Spleen (tissue), 13 donors: ENCODE measurements at regions of chr10 and their contacts with region 1.

Region 1: DNA sequence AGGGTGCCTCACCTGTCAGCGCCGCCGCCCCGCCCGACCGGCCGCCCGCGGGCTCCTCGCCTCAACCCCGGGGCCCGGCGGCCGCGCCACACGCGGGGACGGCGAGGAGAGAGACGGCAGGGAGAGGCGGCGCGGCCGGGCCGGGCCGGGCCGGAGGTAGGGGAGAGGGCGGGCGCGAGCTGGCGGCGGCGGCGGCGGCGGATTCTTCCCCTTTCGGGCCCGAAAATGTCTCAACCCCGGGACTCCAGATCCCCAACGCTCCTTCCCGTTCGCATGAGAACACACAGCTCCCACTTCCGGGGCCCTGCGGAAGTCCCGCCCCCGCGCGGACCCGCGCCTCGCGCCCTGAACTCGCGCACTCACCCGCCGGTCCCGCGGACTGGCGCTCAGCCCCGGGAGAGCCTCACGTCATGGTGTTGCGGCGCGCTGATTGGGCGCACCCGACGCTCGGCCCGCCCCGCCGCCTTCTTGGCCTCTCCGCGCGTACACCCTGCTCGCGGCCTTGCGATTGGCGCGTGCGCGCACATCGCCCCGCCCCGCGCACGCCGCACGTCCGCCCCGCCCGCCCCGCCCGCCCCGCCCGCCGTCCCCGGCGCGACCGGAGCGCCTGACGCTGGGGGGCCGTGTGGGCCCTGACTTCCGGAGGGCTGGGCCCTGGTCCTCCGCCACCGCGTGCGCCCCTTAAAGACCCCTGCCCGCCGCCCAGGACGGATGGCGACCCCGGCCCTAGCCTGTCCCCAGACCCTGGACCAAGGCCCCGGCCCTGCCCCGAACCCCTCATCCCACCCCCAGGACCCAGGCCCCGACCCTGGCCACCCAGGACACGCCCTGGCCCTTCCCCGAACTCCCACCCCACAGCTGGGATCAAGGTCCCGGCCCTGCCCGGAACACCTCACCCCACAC is at the start of gene LARP4B:
- DNase-seq: peak; percentile 99
- H3K4me3 ChIP-seq: peak within 1 kb of the TSS; percentile 40 to 89 (median 61)
- H3K27ac ChIP-seq: peak within 1 kb of the TSS; percentile 74 to 98 (median 94)
- H3K4me1 ChIP-seq: peaks cover 21 to 55% (median 39%) of the 10 kb centered on the region in 6 donors
- H3K27me3 ChIP-seq: no peaks in the 10 kb centered on the region
- CTCF ChIP-seq: no peak
- POLR2A ChIP-seq: peak in 2 of 3 donors; percentile 15 to 41
- total RNA-seq, gene LARP4B: 78.8 to 163 (median 105) TPM

Region 2: DNA sequence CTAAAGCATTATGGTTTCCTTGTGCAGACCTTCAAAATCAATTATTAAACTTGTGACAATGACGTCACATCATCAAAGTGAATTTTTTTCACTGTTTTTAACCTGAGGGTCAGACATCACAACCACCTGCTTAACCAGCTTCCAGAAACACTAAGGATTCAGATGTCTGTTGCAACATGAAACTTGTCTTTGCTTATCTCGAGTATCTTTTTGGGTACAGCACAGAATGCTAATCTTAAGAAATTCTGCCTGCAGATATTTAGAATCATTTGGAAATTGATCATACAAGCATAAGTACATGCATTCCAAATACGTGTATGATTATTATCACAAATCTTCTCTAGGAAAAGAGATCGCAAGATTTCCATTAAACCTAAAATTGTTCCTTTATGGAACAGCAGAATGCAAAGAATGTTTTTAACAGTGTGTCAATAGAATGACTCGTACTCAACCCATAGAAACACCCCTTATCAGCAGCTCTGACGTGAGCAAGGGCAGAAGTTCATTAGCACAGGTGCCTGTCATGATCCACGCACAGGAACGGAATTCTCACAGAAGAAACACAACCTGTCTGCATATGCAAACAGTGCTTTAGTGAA is 52.5 kb after region 1 on chr10:
- intact Hi-C with region 1: no loop called
- DNase-seq: no peak
- H3K4me3 ChIP-seq: no peak overlapping the region
- H3K27ac ChIP-seq: no peak overlapping the region
- H3K4me1 ChIP-seq: peaks cover 10 to 24% (median 15%) of the 10 kb centered on the region in 6 donors
- H3K27me3 ChIP-seq: no peaks in the 10 kb centered on the region
- CTCF ChIP-seq: no peak
- POLR2A ChIP-seq: no peak

Region 3: DNA sequence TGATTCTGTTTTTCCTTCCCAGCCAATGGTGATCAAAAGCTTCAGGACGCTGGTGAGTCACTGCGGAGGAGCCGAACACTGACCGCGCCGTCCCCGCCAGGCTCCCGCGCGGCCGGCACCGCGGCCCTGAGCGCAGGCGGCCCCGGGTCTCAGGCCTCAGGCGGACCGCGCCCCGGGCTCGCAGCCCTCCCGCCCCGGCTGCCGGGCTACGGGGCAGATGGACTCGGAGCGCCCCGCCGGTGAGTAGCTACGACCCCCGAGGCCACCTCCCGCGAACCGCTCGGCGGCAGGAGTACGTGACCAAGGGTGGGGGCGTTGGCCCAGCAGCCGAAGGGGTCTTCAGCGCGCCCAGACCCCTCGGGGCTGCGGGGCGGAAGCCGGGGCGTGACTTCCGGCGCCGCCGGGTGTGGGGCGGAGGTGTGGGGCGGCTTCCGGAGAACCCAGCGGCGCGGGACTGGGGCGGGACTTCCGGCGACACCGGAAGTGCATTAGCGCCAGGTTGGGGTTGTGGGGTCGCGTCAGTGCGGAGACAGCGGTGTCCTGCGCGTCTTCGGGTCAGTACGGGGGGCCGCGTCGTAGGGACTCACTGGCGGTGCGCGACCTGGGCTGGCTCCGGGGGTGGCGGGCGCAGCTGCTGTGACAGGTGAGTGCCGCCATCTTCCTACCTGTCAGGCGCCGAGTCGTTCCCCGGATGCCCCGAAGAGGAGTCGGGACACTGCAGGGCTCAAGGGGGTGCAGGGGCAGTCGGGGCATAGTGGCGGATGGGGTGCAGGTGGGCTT is 124.8 kb after region 1 on chr10 and contains the start of gene WDR37:
- intact Hi-C with region 1: loop called (anchors 5 kb)
- DNase-seq: peak; percentile 97
- H3K4me3 ChIP-seq: peak within 1 kb of the TSS; percentile 88 to 99 (median 95)
- H3K27ac ChIP-seq: peak within 1 kb of the TSS; percentile 96 to 100 (median 100)
- H3K4me1 ChIP-seq: peaks cover 51 to 90% (median 77%) of the 10 kb centered on the region in 6 donors
- H3K27me3 ChIP-seq: no peaks in the 10 kb centered on the region
- CTCF ChIP-seq: no peak
- POLR2A ChIP-seq: peak in 1 of 3 donors; percentile 47
- total RNA-seq, gene WDR37: 29.2 to 60.6 (median 40.4) TPM

Region 4: DNA sequence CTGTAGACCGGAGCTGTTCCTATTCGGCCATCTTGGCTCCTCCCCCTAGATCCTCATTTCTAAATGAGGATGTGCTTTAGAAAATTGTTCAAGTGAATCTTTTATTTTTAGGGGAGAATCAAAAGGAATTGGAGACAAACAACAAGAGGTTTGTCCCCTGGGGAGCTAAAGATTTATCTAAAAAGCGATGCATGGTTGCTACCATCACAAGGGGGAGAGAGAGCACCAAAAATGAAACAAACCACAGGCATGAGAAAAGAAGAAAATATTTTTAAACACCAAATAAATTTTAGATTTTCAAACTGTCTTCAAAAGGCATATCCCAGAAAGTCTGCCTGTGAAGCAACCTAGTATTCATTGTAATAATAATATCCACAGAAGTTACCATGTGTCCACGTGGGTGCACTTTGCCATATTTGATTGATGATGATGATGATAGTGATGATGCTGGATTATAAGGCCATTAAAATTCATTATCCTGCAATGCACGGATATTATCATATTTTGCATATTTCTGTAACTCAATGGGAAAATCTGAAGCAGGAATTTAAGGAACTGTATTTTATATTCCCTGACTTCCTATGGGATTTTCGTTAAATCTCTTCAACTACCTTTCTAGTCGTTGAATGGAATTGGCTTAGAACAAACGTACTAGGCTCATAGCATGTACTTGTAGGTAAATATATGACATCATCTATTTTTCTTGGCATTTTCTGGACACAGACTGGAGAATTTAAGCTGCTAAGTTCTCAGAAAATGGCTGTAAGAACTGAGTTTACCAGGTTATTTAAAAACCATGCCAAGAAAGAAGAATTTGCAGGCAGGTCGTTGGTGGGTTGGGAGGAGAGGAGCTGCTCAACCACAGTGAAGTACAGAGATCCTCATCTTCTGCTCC is 296.1 kb after region 1 on chr10:
- intact Hi-C with region 1: no loop called
- DNase-seq: no peak
- H3K4me3 ChIP-seq: no peak overlapping the region
- H3K27ac ChIP-seq: no peak overlapping the region
- H3K4me1 ChIP-seq: no peaks in the 10 kb centered on the region
- H3K27me3 ChIP-seq: peaks cover 0 to 11% (median 0%) of the 10 kb centered on the region in 7 donors
- CTCF ChIP-seq: no peak
- POLR2A ChIP-seq: no peak